Colonic mucosa (tissue), 4 donors: ENCODE measurements at regions of chr1 and their contacts with region 1.

Region 1: DNA sequence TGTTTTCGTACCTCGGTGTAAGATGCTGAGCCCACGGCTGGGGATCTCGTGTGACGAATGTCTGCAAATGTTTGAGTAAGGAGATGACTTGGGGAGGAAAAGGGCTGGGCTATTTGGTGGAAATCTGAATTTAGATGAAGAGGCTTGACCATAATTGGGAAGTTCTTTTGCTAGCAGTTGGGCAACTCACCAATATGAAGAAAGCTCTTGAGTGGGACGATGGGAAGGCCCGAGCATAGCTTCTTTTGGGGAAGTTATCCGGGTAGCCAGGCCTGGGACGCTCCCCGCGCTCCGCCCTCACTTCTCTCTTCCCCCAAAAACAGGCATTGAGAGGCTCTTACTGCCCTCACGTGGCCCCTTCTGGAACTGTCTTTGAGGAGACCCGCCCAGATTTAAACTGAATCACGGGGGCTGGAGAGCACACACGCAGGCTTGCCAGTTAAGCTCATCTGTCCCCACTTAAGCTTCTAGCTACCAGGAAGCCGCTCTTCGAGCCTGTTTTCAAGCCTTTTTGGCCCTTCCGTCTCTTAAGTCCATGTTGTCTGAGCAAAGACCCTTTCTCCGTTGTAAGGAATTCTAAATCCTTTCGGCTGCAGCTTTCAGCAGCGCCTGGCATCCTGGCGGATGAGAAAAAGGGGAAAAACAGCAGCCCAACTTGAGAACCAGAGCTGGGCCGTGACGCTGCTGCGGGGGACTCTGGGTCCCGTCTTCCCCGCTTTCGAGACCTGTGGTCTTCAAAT is 93.1 kb downstream of the NID1 start:
- DNase-seq: peak; percentile 94
- H3K4me3 ChIP-seq: no peak overlapping the region
- H3K27ac ChIP-seq: peak overlapping the region; percentile 62
- H3K4me1 ChIP-seq: no peaks in the 10 kb centered on the region
- H3K27me3 ChIP-seq: no peaks in the 10 kb centered on the region
- CTCF ChIP-seq: peak; percentile 84

Region 2: DNA sequence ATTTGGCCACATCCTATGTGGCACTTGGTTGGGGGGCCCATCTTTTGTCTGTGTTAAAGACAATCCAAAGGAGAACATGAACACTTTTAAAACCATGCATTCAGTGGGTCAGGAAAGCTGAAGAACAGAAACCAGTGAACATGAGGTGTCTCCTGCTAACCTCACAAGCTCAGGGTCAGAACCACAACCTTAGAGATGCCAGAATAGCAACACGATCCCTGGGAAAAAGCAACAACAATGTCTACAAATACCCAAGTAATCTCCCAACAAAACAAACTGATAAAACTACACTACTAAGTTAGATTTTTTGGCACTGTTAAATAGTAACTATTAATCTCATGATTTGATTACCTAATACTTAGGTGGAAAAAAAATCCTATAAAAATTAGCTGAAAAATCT is 288.1 kb before region 1 on chr1:
- intact Hi-C with region 1: no loop called
- DNase-seq: no peak
- H3K4me3 ChIP-seq: no peak overlapping the region
- H3K27ac ChIP-seq: no peak overlapping the region
- H3K4me1 ChIP-seq: no peaks in the 10 kb centered on the region
- H3K27me3 ChIP-seq: no peaks in the 10 kb centered on the region
- CTCF ChIP-seq: no peak

Region 3: DNA sequence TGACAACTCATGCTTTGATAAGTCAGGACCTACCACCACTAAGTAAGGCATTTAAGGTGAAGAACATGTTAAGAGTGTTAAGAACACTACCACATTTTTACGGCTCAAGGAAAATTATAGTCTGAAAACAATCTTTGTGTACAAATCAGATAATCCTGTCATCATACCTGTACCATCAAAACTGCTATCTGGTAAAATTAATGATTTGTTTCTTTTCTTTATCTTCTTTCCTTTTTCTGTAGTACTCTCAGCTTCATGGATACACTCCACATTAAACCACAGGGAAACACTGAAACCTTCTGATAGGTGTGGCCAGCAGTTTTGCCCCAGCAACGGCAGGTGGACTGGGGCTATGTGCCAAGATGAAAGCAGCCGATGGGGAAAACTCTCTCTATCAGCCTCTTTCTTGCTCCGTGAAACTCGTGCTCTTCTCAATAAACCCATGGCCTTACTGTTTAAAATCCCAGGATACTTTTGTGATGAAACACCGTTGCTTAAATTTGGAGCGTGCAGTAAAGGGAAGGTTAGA is 180.1 kb before region 1 on chr1:
- intact Hi-C with region 1: loop called (anchors 10 kb)
- DNase-seq: peak; percentile 38
- H3K4me3 ChIP-seq: no peak overlapping the region
- H3K27ac ChIP-seq: no peak overlapping the region
- H3K4me1 ChIP-seq: no peaks in the 10 kb centered on the region
- H3K27me3 ChIP-seq: no peaks in the 10 kb centered on the region
- CTCF ChIP-seq: no peak

Region 4: DNA sequence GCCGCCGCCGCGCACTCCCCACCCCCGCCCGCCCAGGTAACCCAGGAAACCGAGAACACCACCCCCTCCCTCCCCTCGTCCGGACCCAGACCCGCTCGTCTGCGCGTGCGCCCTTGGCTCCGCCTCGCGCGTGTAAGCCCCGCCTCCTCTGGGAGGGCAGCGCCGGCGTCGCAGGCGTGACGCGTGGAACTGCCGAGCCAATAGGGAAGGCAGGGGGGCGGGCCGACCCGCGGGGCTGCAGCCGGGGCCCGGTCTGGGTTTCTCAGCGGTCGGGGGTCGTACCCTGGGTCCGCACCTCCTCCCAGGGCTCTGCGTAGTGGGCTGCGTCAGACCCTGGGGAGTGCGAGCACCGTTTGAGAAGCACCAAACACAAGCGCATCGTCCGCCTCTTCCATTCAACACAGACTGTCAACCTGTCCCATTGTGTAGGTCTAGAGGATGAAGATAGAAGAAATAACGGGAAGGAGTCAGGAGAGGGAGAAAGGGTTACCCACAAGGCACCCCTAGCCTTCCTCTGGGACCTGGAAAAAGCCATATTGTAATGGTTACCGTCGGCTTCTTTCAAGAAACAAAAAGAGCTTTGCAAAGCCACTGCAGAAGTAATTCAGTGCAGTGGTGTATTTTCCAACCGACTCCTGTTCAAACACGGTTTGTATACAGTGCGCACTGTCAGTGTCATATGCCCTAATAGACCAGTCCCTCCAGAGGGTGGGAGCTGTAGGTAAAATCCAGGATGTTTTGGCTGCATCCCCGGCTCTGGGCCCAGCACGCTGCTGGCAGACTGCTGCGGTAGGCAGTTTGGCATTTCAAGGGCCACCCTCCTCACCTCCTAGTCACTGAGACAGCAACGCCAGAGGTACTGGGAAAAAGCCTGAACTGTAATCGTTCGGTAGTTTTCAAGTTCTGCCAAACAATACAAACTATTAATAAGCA is 104.6 kb before region 1 on chr1:
- intact Hi-C with region 1: loop called (anchors 10 kb)
- DNase-seq: peak; percentile 98
- H3K4me3 ChIP-seq: peak overlapping the region; percentile 77
- H3K27ac ChIP-seq: peak overlapping the region; percentile 87
- H3K4me1 ChIP-seq: no peaks in the 10 kb centered on the region
- H3K27me3 ChIP-seq: no peaks in the 10 kb centered on the region
- CTCF ChIP-seq: no peak